Caco-2 (cell line): ENCODE measurements at regions of chr12 and their contacts with region 1.

Region 1: DNA sequence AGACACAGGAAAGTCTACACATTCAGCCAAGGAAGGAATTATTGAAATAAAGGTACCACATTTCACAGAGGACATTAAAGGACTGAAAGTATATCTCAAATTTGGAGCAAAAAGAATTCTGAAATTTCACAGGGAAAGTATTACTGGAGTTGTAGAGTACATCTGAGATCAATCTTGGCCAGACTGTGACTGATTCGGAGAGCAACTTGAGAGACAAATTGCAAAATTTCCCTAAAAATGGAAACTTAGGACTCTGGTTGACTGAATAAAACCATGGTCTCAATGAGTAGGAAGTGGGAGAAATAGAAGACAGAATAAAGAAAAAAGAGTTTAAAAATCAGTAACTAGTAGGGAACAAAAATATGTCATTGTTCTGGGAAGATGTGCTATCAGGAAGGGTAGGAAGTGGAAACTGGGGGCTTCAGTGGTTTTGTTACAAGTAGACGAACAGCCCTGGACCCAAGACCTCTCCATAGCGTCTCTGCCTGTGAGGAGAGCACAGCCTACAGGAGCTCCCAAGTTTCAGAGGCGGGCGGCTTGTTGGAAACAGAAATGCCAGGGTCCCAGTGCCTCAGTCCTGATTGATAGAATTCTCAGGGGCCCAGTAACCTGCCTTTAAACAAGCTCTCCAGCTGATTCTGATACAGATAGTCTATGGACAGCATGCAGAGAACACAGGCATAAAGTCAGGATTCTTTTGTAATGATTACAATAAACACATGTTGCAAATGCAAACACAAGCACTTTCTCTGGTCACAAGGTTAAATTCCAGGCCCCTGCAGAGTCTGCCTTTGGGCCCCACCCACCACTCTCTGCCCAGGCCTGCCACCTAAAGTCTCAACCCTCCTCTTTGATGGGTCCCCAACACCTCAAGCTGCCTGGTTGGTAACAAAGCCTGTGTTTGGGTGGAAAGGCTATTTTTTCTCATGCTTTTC is 63.1 kb downstream of the BBS10 start:
- DNase-seq: peak; percentile 42 to 50
- H3K4me3 ChIP-seq: no peak overlapping the region
- H3K4me3 Mint-ChIP-seq: no peak overlapping the region
- H3K27ac Mint-ChIP-seq: no peak overlapping the region
- H3K4me1 ChIP-seq: peaks cover 6% of the 10 kb centered on the region; the same call in 1 of the 2 replicates
- H3K4me1 Mint-ChIP-seq: no peaks in the 10 kb centered on the region
- H3K27me3 ChIP-seq: no peaks in the 10 kb centered on the region
- H3K27me3 Mint-ChIP-seq: no peaks in the 10 kb centered on the region
- CTCF ChIP-seq: no peak

Region 2: GRCh38 chr12:76094754-76095153 is 190.3 kb before region 1 on chr12:
- CTCF ChIA-PET with region 1: interaction called, 12 read pairs
- POLR2A ChIA-PET with region 1: no interaction called
- intact Hi-C with region 1: no loop called
- DNase-seq: no peak
- H3K4me3 ChIP-seq: no peak overlapping the region
- H3K4me3 Mint-ChIP-seq: no peak overlapping the region
- H3K27ac Mint-ChIP-seq: no peak overlapping the region
- H3K4me1 ChIP-seq: no peaks in the 10 kb centered on the region
- H3K4me1 Mint-ChIP-seq: no peaks in the 10 kb centered on the region
- H3K27me3 ChIP-seq: no peaks in the 10 kb centered on the region
- H3K27me3 Mint-ChIP-seq: no peaks in the 10 kb centered on the region
- CTCF ChIP-seq: no peak

Region 3: GRCh38 chr12:76103958-76104357 is 181.1 kb before region 1 on chr12:
- CTCF ChIA-PET with region 1: interaction called, 10 read pairs
- POLR2A ChIA-PET with region 1: no interaction called
- intact Hi-C with region 1: no loop called
- DNase-seq: no peak
- H3K4me3 ChIP-seq: no peak overlapping the region
- H3K4me3 Mint-ChIP-seq: no peak overlapping the region
- H3K27ac Mint-ChIP-seq: no peak overlapping the region
- H3K4me1 ChIP-seq: peaks cover 24% of the 10 kb centered on the region
- H3K4me1 Mint-ChIP-seq: no peaks in the 10 kb centered on the region
- H3K27me3 ChIP-seq: no peaks in the 10 kb centered on the region
- H3K27me3 Mint-ChIP-seq: no peaks in the 10 kb centered on the region
- CTCF ChIP-seq: no peak